ENCODE measurements at regions of chr19 and their contacts with region 1.

Region 1: GRCh38 chr19:7535035-7535992 is at the start of gene PNPLA6:
- DNase-seq: peak; percentile 85 to 95 (median 90)
- ATAC-seq: peak; percentile 77
- H3K4me3 ChIP-seq: peak within 1 kb of the TSS; percentile 93
- H3K4me3 Mint-ChIP-seq: peak within 1 kb of the TSS; percentile 98
- H3K27ac ChIP-seq: peak within 1 kb of the TSS; percentile 67 to 79
- H3K27ac Mint-ChIP-seq: peak within 1 kb of the TSS; percentile 87
- H3K4me1 ChIP-seq: peaks cover 40% of the 10 kb centered on the region
- H3K4me1 Mint-ChIP-seq: peaks cover 29% of the 10 kb centered on the region
- H3K27me3 ChIP-seq: no peaks in the 10 kb centered on the region
- H3K27me3 Mint-ChIP-seq: no peaks in the 10 kb centered on the region
- CTCF ChIP-seq: no peak
- total RNA-seq, gene PNPLA6: 62.0 to 70.9 TPM

Region 2: DNA sequence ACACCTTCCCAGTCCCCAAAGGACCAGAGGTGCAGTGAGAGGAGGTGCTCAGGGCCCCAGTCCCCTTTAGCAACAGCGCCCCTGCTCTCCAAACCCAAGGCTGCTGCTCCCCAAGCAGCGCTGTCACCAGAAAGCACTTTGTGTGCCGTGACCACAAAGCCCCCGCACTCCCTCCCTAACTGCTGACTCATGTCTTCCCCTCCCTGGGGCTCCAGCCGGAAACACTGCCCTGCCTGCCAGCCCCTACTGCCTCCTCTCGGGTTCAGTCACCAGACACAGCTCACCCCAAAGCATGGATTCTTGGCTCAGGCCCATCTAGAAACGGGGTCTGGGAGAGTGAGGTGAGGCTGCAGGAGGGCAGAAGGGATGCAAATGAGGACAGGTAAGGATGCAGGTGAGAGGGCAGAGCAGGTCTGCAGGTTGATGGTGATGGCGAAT is 860.4 kb before region 1 on chr19:
- CTCF ChIA-PET with region 1: no interaction called
- POLR2A ChIA-PET with region 1: no interaction called
- intact Hi-C with region 1: no loop called
- DNase-seq: peak; percentile 49 to 93 (median 78)
- ATAC-seq: peak; percentile 79
- H3K4me3 ChIP-seq: peak overlapping the region; percentile 24
- H3K4me3 Mint-ChIP-seq: peak overlapping the region; percentile 60
- H3K27ac ChIP-seq: peak overlapping the region in 1 of 2 donors; percentile 18
- H3K27ac Mint-ChIP-seq: peak overlapping the region; percentile 71
- H3K4me1 ChIP-seq: peaks cover 66% of the 10 kb centered on the region
- H3K4me1 Mint-ChIP-seq: peaks cover 50% of the 10 kb centered on the region
- H3K27me3 ChIP-seq: no peaks in the 10 kb centered on the region
- H3K27me3 Mint-ChIP-seq: no peaks in the 10 kb centered on the region
- CTCF ChIP-seq: no peak

Region 3: DNA sequence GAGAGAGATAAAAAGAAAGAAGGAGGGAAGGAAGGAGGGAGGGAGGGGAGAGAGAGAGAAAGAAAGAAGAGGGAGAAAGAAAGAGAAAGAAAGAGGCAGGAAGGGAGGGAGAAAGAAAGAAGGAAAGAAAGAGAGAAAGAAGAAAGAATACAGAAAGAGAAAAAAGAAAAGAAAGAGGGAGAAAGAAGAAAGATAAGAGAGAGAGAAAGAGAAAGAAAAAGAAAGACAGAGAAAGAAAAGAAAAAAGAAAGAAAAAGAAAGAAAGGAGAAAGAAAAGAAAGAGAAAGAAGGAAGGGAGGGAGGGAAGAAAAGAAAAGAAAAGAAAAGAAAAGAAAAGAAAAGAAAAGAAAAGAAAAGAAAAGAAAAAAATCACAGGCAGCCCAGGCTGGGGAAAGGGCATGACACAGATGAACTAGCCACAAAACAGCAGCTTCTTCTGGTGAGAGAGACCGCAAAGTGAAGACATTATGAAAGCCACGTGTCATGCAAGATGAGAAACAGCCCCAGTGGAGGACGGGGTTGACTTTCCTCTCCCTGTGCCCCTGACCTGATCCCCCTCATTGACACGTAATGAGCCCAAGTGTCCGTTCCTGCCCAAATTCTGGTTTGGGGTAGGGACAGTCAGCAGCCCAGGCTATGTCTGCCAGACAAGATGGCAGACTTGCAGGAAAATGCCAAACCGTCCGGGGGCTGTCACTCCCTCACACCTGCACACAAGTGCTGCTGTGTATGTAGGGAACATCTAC is 343.2 kb before region 1 on chr19:
- CTCF ChIA-PET with region 1: no interaction called
- POLR2A ChIA-PET with region 1: no interaction called
- intact Hi-C with region 1: loop called in 1 of 2 experiments (anchors 2 kb)
- DNase-seq: peak; percentile 12 to 80 (median 30)
- ATAC-seq: peak; percentile 76
- H3K4me3 ChIP-seq: peak overlapping the region; percentile 8
- H3K4me3 Mint-ChIP-seq: peak overlapping the region; percentile 14
- H3K27ac ChIP-seq: no peak overlapping the region
- H3K27ac Mint-ChIP-seq: peak overlapping the region; percentile 35
- H3K4me1 ChIP-seq: peaks cover 26% of the 10 kb centered on the region
- H3K4me1 Mint-ChIP-seq: peaks cover 22% of the 10 kb centered on the region
- H3K27me3 ChIP-seq: no peaks in the 10 kb centered on the region
- H3K27me3 Mint-ChIP-seq: peaks cover under 1% of the 10 kb centered on the region
- CTCF ChIP-seq: no peak

Region 4: GRCh38 chr19:7522072-7522922 is 13.0 kb before region 1 on chr19 and contains the start of gene MCOLN1:
- CTCF ChIA-PET with region 1: interaction called, 5 read pairs
- POLR2A ChIA-PET with region 1: interaction called, 50 read pairs
- intact Hi-C with region 1: loop called (anchors 1 kb)
- DNase-seq: peak; percentile 99 to 100 (median 100)
- ATAC-seq: peak; percentile 90
- H3K4me3 ChIP-seq: peak within 1 kb of the TSS; percentile 72
- H3K4me3 Mint-ChIP-seq: peak within 1 kb of the TSS; percentile 97
- H3K27ac ChIP-seq: no peak within 1 kb of the TSS
- H3K27ac Mint-ChIP-seq: peak within 1 kb of the TSS; percentile 74
- H3K4me1 ChIP-seq: peaks cover 19% of the 10 kb centered on the region
- H3K4me1 Mint-ChIP-seq: peaks cover 20% of the 10 kb centered on the region
- H3K27me3 ChIP-seq: peaks cover 0 to 4% of the 10 kb centered on the region in 2 experiments
- H3K27me3 Mint-ChIP-seq: peaks cover 5% of the 10 kb centered on the region
- CTCF ChIP-seq: no peak
- total RNA-seq, gene MCOLN1: 7.9 to 8.8 TPM

Region 5: DNA sequence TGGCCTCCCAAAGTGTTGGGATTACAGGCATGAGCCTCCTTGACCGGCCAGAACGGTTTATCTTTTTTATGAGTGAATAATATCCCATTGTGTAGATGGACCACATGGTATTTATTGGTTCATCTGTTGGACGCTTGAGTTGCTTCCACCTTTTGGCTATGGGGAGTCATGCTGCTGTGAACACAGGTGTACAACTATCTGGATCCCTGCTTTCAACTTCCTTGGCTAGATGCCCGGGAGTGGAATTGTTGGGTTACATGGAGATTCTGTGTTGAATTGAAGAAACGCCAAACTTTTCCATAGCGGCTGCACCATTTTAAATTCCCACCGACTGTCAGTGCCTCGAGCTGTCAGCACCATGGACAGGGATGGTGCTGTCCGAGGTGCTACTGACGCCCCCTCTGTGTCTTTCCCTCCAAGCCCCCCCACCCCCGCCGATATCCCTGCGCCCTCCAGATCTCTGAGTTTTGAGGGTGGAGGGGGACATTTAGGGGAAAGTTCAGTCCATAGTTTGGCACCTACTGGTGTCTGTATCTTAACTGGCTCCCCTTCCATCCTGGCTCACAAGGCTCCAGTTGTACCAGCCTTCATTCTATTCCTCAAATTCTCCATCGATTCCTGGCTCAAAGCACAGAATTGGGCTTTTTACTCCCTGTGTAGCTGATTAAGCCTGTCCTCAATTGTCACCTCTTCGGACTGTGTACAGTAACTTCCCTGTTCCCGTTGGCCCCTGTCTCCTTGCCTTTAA is 27.5 kb after region 1 on chr19:
- CTCF ChIA-PET with region 1: interaction called, 10 read pairs
- POLR2A ChIA-PET with region 1: no interaction called
- intact Hi-C with region 1: no loop called
- DNase-seq: peak in 2 of 14 experiments; percentile 31 to 35
- ATAC-seq: no peak
- H3K4me3 ChIP-seq: no peak overlapping the region
- H3K4me3 Mint-ChIP-seq: no peak overlapping the region
- H3K27ac ChIP-seq: no peak overlapping the region
- H3K27ac Mint-ChIP-seq: no peak overlapping the region
- H3K4me1 ChIP-seq: no peaks in the 10 kb centered on the region
- H3K4me1 Mint-ChIP-seq: no peaks in the 10 kb centered on the region
- H3K27me3 ChIP-seq: no peaks in the 10 kb centered on the region
- H3K27me3 Mint-ChIP-seq: no peaks in the 10 kb centered on the region
- CTCF ChIP-seq: no peak

Region 6: GRCh38 chr19:7705387-7706187 is 170.3 kb after region 1 on chr19:
- CTCF ChIA-PET with region 1: no interaction called
- POLR2A ChIA-PET with region 1: no interaction called
- intact Hi-C with region 1: no loop called
- DNase-seq: peak; percentile 56 to 92 (median 72)
- ATAC-seq: peak; percentile 95
- H3K4me3 ChIP-seq: peak overlapping the region; percentile 28
- H3K4me3 Mint-ChIP-seq: peak overlapping the region; percentile 78
- H3K27ac ChIP-seq: peak overlapping the region; percentile 80 to 83
- H3K27ac Mint-ChIP-seq: peak overlapping the region; percentile 97
- H3K4me1 ChIP-seq: peaks cover 57% of the 10 kb centered on the region
- H3K4me1 Mint-ChIP-seq: peaks cover 45% of the 10 kb centered on the region
- H3K27me3 ChIP-seq: no peaks in the 10 kb centered on the region
- H3K27me3 Mint-ChIP-seq: no peaks in the 10 kb centered on the region
- CTCF ChIP-seq: no peak

Region 7: GRCh38 chr19:7903244-7904073 is 368.1 kb after region 1 on chr19 and contains the start of gene MAP2K7:
- CTCF ChIA-PET with region 1: no interaction called
- POLR2A ChIA-PET with region 1: interaction called, 5 read pairs
- intact Hi-C with region 1: loop called in 1 of 2 experiments (anchors 10 kb)
- DNase-seq: peak; percentile 100
- ATAC-seq: peak; percentile 87
- H3K4me3 ChIP-seq: peak within 1 kb of the TSS; percentile 85
- H3K4me3 Mint-ChIP-seq: peak within 1 kb of the TSS; percentile 92
- H3K27ac ChIP-seq: peak within 1 kb of the TSS; percentile 68 to 87
- H3K27ac Mint-ChIP-seq: peak within 1 kb of the TSS; percentile 89
- H3K4me1 ChIP-seq: peaks cover 48% of the 10 kb centered on the region
- H3K4me1 Mint-ChIP-seq: peaks cover 26% of the 10 kb centered on the region
- H3K27me3 ChIP-seq: no peaks in the 10 kb centered on the region
- H3K27me3 Mint-ChIP-seq: peaks cover 6% of the 10 kb centered on the region
- CTCF ChIP-seq: peak; percentile 73
- total RNA-seq, gene MAP2K7: 81.7 to 82.3 TPM

Measured in CD4-positive, alpha-beta T cell (primary cell).